Sigmoid colon (tissue), 7 donors: ENCODE measurements at regions of chr6 and their contacts with region 1.

Region 1: DNA sequence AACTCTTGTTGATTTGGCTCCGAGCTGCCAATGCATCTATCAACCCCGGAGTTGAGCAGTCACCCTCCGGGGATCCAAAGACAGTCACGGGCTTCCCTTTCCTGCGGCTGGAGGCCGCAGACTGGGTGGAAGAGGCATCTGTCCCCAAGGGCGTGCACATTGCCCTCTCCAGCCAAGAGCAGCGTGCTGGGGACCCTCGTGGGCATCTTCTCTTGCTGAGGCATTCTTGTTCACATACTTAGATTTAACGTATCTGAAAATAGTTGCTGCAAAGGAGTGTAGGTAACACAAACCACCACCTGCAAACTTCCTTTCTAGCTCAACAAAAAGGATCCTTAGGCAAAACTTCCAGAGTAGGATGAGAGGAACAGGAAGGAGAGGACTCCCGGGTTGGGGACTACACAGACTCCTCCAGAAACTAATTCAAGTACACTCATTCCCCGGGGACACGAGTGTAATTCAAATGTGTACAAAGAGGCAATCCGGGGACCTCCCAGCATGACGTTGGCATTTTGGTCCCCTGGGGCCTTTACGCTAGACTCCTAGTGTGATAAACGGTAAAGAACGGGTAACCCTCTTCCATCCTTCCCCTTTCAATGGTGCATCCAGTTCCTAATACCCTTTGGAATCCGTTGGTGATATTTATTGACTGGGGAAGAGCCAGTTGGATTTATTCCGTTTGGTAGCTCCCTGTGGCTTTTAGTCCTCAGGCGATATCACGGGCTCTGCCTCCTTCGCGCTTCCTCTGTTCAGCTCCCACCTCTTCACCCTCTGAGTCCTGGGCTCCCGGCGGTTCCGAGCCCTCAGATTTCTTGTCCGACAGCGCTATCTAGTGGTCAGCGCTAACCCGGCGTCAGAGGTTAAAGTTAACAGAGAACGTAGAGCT is 2.7 kb upstream of the COL12A1 start:
- DNase-seq: peak; percentile 93
- H3K4me3 ChIP-seq: peak overlapping the region in 1 of 4 donors; percentile 29
- H3K27ac ChIP-seq: peak overlapping the region; percentile 7 to 65 (median 40)
- H3K4me1 ChIP-seq: peaks cover 0 to 40% (median 12%) of the 10 kb centered on the region in 4 donors
- H3K27me3 ChIP-seq: no peaks in the 10 kb centered on the region
- CTCF ChIP-seq: peak; percentile 74 to 87 (median 82)
- EP300 ChIP-seq: no peak
- POLR2A ChIP-seq: no peak

Region 2: DNA sequence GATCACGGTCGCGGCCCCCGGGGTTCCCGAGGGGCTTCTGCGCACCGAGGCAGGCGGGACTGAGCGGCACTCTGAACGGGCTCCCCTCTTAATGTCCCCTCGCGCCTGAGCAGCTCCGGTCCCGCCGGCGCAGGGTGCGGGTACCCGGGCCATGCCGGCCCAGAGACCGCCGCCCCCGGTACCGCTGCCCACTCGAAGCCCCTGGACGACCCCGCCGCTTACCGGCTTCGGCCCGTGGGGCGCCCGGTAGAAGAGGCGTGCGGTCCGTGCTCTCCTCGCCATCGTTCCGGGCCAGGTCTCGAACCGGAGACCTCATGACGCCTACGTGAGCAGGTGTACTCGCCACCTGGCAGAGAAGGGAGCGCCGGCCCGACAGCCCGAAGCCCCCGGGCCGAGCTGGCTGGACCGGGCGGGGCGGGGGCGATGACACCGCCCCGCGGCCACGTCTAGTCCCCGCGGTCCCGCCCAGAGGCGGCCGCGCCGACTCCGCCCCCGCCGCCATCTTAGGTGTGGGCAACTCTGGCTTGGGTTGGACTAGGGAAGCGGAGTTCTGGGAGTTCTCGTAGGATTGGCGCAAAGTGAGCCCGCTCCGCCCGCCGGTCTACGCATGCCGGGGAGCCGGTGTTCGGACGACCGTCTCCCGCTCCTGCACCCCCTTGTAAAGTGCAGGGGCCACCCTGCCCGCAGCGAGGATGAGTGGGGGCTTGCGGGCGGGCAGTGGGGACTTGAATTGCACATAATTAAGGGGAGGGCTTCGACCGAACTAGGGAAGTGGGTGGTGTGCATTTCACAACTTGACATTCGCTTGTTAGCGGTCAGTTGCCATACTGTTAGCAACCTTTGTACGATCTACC is 1554.7 kb before region 1 on chr6 and contains the start of gene SLC17A5:
- intact Hi-C with region 1: loop called (anchors 10 kb)
- DNase-seq: peak; percentile 97
- H3K4me3 ChIP-seq: peak within 1 kb of the TSS; percentile 84 to 98 (median 92)
- H3K27ac ChIP-seq: peak within 1 kb of the TSS; percentile 94 to 99 (median 96)
- H3K4me1 ChIP-seq: peaks cover 0 to 21% (median 15%) of the 10 kb centered on the region in 4 donors
- H3K27me3 ChIP-seq: no peaks in the 10 kb centered on the region
- CTCF ChIP-seq: peak in 1 of 4 experiments; percentile 9
- EP300 ChIP-seq: no peak
- POLR2A ChIP-seq: peak; percentile 34 to 52
- total RNA-seq, gene SLC17A5: 12.2 to 18.2 (median 14.8) TPM

Region 3: DNA sequence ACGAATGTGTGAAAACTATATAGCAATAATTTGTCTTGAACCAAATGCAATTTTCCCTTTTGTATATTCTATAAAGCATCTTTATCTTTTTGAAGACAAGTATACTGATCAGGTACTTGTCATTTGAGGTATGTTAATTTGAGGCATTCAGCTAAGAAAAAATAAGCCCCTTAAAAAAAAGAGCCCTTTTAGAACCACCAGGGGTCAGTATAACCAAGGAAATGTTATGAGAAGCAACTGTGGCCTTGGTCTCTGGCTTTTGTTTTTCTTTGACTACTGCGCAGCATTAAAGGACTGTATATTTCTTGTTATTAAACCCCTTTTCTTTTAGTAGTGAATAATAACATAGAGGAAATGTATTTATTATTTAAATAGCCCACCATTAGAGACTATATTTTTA is 1469.4 kb before region 1 on chr6:
- intact Hi-C with region 1: loop called (anchors 1 kb)
- DNase-seq: no peak
- H3K4me3 ChIP-seq: no peak overlapping the region
- H3K27ac ChIP-seq: peak overlapping the region in 3 of 4 donors; percentile 29 to 38 (median 37)
- H3K4me1 ChIP-seq: peaks cover 0 to 28% (median 18%) of the 10 kb centered on the region in 4 donors
- H3K27me3 ChIP-seq: no peaks in the 10 kb centered on the region
- CTCF ChIP-seq: peak in 3 of 4 experiments; percentile 61 to 87 (median 82)
- EP300 ChIP-seq: no peak
- POLR2A ChIP-seq: no peak

Region 4: GRCh38 chr6:73969971-73970970 is 1238.3 kb before region 1 on chr6:
- intact Hi-C with region 1: loop called (anchors 2 kb)
- DNase-seq: no peak
- H3K4me3 ChIP-seq: no peak overlapping the region
- H3K27ac ChIP-seq: no peak overlapping the region
- H3K4me1 ChIP-seq: peaks cover 0 to 31% (median 16%) of the 10 kb centered on the region in 4 donors
- H3K27me3 ChIP-seq: no peaks in the 10 kb centered on the region
- CTCF ChIP-seq: peak; percentile 30 to 61 (median 46)
- EP300 ChIP-seq: no peak
- POLR2A ChIP-seq: no peak

Region 5: GRCh38 chr6:74409447-74409846 is 799.1 kb before region 1 on chr6:
- intact Hi-C with region 1: loop called (anchors 1 kb)
- DNase-seq: no peak
- H3K4me3 ChIP-seq: no peak overlapping the region
- H3K27ac ChIP-seq: no peak overlapping the region
- H3K4me1 ChIP-seq: no peaks in the 10 kb centered on the region
- H3K27me3 ChIP-seq: no peaks in the 10 kb centered on the region
- CTCF ChIP-seq: peak; percentile 10 to 52 (median 26)
- EP300 ChIP-seq: no peak
- POLR2A ChIP-seq: no peak

Region 6: DNA sequence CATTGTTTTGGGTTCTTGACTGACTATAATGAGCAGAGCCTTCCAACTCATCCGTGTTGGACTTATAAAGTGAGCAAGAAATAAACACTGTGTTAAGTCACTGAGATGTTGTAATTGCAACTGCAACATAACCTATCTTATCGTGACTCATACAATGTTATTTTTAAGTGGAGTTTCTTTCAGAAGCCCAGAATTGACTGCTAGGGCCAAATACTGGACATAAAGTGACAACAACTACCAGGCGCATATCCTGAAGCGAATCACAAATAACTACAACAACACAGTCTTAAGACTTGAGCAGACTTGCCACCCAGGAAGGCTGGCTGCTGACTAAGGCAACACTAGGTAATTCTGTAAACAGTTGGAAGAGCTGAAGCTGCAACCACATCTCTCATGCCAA is 329.3 kb before region 1 on chr6:
- intact Hi-C with region 1: loop called (anchors 5 kb)
- DNase-seq: no peak
- H3K4me3 ChIP-seq: no peak overlapping the region
- H3K27ac ChIP-seq: peak overlapping the region in 2 of 4 donors; percentile 49 to 56
- H3K4me1 ChIP-seq: peaks cover 0 to 11% (median 6%) of the 10 kb centered on the region in 4 donors
- H3K27me3 ChIP-seq: no peaks in the 10 kb centered on the region
- CTCF ChIP-seq: no peak
- EP300 ChIP-seq: no peak
- POLR2A ChIP-seq: no peak